ENCODE measurements at regions of chr15 and their contacts with region 1.

Region 1: GRCh38 chr15:99961011-99961441 is 227.8 kb upstream of the LYSMD4 start:
- DNase-seq: peak; percentile 56
- ATAC-seq: no peak
- H3K4me3 ChIP-seq: no peak overlapping the region
- H3K27ac ChIP-seq: no peak overlapping the region
- H3K4me1 ChIP-seq: peaks cover 21% of the 10 kb centered on the region
- H3K27me3 ChIP-seq: no peaks in the 10 kb centered on the region
- CTCF ChIP-seq: peak; percentile 57

Region 2: DNA sequence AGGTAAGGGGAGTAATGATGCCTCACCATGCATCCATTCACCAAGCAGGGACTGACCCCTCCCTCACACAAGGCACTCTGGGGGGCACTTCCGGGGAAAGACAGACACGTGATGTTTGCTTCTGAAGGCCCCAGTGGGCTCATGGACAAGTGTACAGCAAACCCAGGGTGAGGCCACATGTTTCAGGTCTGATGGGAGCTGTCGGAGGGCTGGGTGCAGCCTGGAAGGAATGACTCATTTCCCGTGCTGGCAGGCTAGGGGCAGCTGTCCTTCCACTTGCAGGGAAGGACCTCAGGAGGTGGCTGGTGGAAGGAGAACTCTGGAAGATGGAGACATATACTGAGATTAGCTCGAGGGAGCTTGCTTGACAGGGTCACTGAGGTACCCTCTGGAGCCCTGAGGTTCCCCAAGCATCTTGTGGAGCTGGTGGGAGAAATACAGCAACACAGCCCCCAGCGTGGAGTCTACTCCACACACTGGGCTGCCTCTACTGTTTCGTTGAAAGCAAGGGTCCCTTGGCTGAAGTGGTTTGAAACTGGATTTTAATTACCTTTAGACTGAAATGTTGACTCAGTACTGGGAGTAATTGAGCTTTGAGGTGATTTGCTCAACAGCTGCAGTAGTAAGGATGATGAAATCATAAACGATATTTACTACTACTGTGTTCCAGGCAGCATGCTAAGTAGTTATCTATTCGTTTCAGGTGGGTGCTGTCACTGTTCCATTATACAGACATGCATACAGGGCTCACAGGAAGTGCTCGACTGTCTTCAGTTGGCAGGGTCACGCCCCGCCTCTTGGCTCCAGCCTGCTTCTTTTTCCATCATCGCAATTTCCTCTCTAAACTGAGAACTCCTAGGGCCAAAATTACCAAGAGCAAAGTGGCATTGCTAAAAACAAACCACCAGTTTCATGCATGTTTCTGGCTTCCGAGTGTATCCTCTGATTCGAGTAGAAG is 150.4 kb after region 1 on chr15:
- CTCF ChIA-PET with region 1: no interaction called
- POLR2A ChIA-PET with region 1: no interaction called
- intact Hi-C with region 1: loop called (anchors 10 kb)
- DNase-seq: peak; percentile 85
- ATAC-seq: peak; percentile 92
- H3K4me3 ChIP-seq: no peak overlapping the region
- H3K27ac ChIP-seq: peak overlapping the region; percentile 83
- H3K4me1 ChIP-seq: peaks cover 40% of the 10 kb centered on the region
- H3K27me3 ChIP-seq: no peaks in the 10 kb centered on the region
- CTCF ChIP-seq: no peak

Region 3: GRCh38 chr15:100191161-100191560 is 230.1 kb after region 1 on chr15:
- CTCF ChIA-PET with region 1: no interaction called
- POLR2A ChIA-PET with region 1: no interaction called
- intact Hi-C with region 1: no loop called
- DNase-seq: no peak
- ATAC-seq: no peak
- H3K4me3 ChIP-seq: no peak overlapping the region
- H3K27ac ChIP-seq: no peak overlapping the region
- H3K4me1 ChIP-seq: no peaks in the 10 kb centered on the region
- H3K27me3 ChIP-seq: no peaks in the 10 kb centered on the region
- CTCF ChIP-seq: no peak

Measured in PC-3 (cell line).